ENCODE measurements at regions of chr5 and their contacts with region 1.

Region 1: DNA sequence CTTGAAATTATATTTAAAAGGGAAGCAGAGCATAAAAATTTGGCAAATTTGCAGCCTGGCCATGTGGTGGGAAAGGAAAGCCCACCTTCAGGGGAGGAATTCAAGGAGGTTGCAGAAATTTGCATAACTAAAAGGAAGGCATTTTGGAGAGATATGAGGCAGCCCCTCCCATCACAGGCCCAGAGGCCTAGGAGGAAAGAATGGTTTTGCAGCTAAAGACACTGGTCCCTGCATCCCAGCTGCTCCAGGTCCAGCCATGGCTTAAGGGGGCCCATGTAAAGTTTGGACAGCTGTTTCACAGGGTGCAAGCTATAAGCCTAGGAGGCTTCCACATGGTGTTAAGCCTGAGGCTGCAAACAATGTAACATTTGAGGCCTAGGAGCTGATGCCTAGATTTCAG is 212.5 kb downstream of the NNT start:
- DNase-seq: no peak
- ATAC-seq: no peak
- H3K4me3 ChIP-seq: no peak overlapping the region
- H3K4me3 Mint-ChIP-seq: no peak overlapping the region
- H3K27ac ChIP-seq: no peak overlapping the region
- H3K27ac Mint-ChIP-seq: no peak overlapping the region
- H3K4me1 ChIP-seq: no peaks in the 10 kb centered on the region
- H3K4me1 Mint-ChIP-seq: no peaks in the 10 kb centered on the region
- H3K27me3 ChIP-seq: no peaks in the 10 kb centered on the region
- H3K27me3 Mint-ChIP-seq: no peaks in the 10 kb centered on the region
- CTCF ChIP-seq: no peak

Region 2: GRCh38 chr5:43110606-43111442 is 704.7 kb before region 1 on chr5:
- CTCF ChIA-PET with region 1: no interaction called
- POLR2A ChIA-PET with region 1: no interaction called
- intact Hi-C with region 1: no loop called
- DNase-seq: peak; percentile 25
- ATAC-seq: no peak
- H3K4me3 ChIP-seq: no peak overlapping the region
- H3K4me3 Mint-ChIP-seq: no peak overlapping the region
- H3K27ac ChIP-seq: no peak overlapping the region
- H3K27ac Mint-ChIP-seq: no peak overlapping the region
- H3K4me1 ChIP-seq: peaks cover 0 to 3% of the 10 kb centered on the region in 2 donors
- H3K4me1 Mint-ChIP-seq: peaks cover under 1% of the 10 kb centered on the region
- H3K27me3 ChIP-seq: no peaks in the 10 kb centered on the region
- H3K27me3 Mint-ChIP-seq: no peaks in the 10 kb centered on the region
- CTCF ChIP-seq: peak; percentile 22

Region 3: GRCh38 chr5:43664501-43665040 is 150.9 kb before region 1 on chr5:
- CTCF ChIA-PET with region 1: no interaction called
- POLR2A ChIA-PET with region 1: no interaction called
- intact Hi-C with region 1: loop called (anchors 5 kb)
- DNase-seq: no peak
- ATAC-seq: no peak
- H3K4me3 ChIP-seq: no peak overlapping the region
- H3K4me3 Mint-ChIP-seq: no peak overlapping the region
- H3K27ac ChIP-seq: no peak overlapping the region
- H3K27ac Mint-ChIP-seq: no peak overlapping the region
- H3K4me1 ChIP-seq: no peaks in the 10 kb centered on the region
- H3K4me1 Mint-ChIP-seq: no peaks in the 10 kb centered on the region
- H3K27me3 ChIP-seq: no peaks in the 10 kb centered on the region
- H3K27me3 Mint-ChIP-seq: no peaks in the 10 kb centered on the region
- CTCF ChIP-seq: no peak